Activated CD4-positive, alpha-beta T cell treated with anti-CD3 and anti-CD28 coated beads, Interleukin-2, amount 10 ng/mL, durations not matched to agents 24 days and 14 days (primary cell): ENCODE measurements at regions of chr18 and their contacts with region 1.

Region 1: GRCh38 chr18:62714671-62715435 is 488 bp upstream of the PHLPP1 start:
- DNase-seq: peak; percentile 97
- H3K4me3 Mint-ChIP-seq: peak overlapping the region; percentile 87
- H3K27ac Mint-ChIP-seq: peak overlapping the region; percentile 86
- H3K4me1 Mint-ChIP-seq: peaks cover 19% of the 10 kb centered on the region
- H3K27me3 Mint-ChIP-seq: peaks cover 27% of the 10 kb centered on the region

Region 2: GRCh38 chr18:62324917-62325805 is 389.7 kb before region 1 on chr18 and contains the start of gene TNFRSF11A:
- intact Hi-C with region 1: loop called (anchors 2 kb)
- DNase-seq: peak; percentile 91
- H3K4me3 Mint-ChIP-seq: peak within 1 kb of the TSS; percentile 91
- H3K27ac Mint-ChIP-seq: peak within 1 kb of the TSS; percentile 89
- H3K4me1 Mint-ChIP-seq: peaks cover 54% of the 10 kb centered on the region
- H3K27me3 Mint-ChIP-seq: peaks cover 39% of the 10 kb centered on the region
- total RNA-seq, gene TNFRSF11A: 14.0 and 16.4 TPM in 2 replicates

Region 3: DNA sequence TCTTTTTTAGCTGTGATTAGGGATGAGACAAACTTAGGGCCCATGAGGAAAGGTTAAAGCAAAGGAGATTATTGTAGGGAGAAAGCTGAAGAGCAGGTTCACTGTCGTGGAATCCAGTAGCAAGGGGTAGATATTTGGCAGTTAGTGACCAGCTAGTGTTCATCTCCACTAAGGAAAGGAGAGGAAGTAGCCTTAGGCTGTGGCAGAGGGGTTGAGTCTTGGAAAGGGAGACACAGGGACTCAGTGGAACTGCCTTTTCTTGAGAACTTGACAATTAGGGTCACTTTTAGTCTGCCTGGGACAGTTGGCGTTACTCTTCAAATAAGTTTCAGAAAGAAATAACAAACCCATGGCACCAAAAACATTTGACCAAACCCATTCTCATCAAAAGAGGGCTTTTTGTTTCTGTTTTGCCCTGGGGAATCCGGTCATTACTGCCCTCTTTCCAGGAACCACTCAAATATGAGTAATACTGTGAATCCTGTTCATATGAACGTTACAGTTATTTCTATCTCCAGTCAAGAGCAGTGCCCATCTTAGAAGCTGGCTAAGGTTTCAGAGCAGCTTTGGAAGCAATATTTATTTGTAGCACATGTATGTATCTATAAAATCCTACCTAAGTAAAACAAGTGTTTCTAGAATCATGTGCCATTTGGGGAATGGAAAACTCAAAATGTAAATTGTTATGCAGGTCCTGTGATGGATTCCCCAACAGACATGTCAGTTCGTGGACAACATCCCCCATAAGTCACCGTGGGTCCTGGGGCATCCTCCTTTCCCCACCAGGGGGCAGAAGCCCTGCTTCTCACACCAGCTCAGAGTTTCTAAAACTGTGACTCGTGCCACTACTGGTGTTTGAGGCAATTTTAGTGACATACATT is 76.8 kb before region 1 on chr18:
- intact Hi-C with region 1: loop called (anchors 5 kb)
- DNase-seq: peak; percentile 85
- H3K4me3 Mint-ChIP-seq: no peak overlapping the region
- H3K27ac Mint-ChIP-seq: no peak overlapping the region
- H3K4me1 Mint-ChIP-seq: peaks cover 7% of the 10 kb centered on the region
- H3K27me3 Mint-ChIP-seq: peaks cover 15% of the 10 kb centered on the region

Region 4: DNA sequence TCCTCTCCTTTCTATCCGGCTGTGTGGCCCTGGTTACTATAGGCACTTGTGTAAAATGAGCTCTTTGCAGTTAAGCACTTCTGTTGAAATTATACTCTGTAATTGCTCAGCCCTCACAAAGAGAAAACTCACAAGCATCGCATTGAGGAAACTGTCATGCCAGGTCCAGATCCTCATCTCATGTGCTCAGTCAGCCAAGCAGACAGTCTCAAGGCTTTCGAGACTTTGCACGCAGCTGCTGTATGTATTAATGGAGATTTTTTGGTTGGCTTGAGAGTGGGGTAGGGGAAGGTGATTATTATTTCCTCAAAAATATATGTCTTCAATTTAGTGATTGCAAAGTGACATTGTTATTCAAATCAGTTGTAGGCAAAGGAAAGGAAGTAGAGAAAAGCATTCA is 32.5 kb before region 1 on chr18:
- intact Hi-C with region 1: no loop called
- DNase-seq: no peak
- H3K4me3 Mint-ChIP-seq: no peak overlapping the region
- H3K27ac Mint-ChIP-seq: no peak overlapping the region
- H3K4me1 Mint-ChIP-seq: no peaks in the 10 kb centered on the region
- H3K27me3 Mint-ChIP-seq: peaks cover 3% of the 10 kb centered on the region

Region 5: GRCh38 chr18:62844850-62845643 is 130.2 kb after region 1 on chr18:
- intact Hi-C with region 1: loop called (anchors 1 kb)
- DNase-seq: peak; percentile 72
- H3K4me3 Mint-ChIP-seq: peak overlapping the region; percentile 80
- H3K27ac Mint-ChIP-seq: peak overlapping the region; percentile 94
- H3K4me1 Mint-ChIP-seq: peaks cover 30% of the 10 kb centered on the region
- H3K27me3 Mint-ChIP-seq: no peaks in the 10 kb centered on the region

Region 6: DNA sequence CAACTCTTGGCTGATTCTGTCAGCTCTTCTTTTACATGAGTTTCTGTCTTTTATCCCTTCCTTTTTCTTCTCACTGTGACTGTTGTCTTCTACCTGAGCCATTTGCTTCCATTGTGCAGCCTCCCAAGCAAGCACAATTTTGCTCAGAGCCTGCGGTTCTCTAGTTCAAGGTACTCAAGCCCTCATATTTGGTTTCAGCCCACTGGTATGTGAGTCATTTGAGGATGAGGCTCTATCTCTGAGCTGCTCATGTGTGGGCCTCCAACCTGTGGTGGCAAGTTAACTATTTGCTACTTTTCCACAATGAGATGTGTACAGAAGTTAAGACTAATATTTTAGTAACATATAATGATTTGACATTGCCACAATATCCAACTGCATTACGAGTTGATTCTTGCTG is 183.5 kb after region 1 on chr18:
- intact Hi-C with region 1: no loop called
- DNase-seq: no peak
- H3K4me3 Mint-ChIP-seq: no peak overlapping the region
- H3K27ac Mint-ChIP-seq: no peak overlapping the region
- H3K4me1 Mint-ChIP-seq: peaks cover 8% of the 10 kb centered on the region
- H3K27me3 Mint-ChIP-seq: no peaks in the 10 kb centered on the region

Region 7: DNA sequence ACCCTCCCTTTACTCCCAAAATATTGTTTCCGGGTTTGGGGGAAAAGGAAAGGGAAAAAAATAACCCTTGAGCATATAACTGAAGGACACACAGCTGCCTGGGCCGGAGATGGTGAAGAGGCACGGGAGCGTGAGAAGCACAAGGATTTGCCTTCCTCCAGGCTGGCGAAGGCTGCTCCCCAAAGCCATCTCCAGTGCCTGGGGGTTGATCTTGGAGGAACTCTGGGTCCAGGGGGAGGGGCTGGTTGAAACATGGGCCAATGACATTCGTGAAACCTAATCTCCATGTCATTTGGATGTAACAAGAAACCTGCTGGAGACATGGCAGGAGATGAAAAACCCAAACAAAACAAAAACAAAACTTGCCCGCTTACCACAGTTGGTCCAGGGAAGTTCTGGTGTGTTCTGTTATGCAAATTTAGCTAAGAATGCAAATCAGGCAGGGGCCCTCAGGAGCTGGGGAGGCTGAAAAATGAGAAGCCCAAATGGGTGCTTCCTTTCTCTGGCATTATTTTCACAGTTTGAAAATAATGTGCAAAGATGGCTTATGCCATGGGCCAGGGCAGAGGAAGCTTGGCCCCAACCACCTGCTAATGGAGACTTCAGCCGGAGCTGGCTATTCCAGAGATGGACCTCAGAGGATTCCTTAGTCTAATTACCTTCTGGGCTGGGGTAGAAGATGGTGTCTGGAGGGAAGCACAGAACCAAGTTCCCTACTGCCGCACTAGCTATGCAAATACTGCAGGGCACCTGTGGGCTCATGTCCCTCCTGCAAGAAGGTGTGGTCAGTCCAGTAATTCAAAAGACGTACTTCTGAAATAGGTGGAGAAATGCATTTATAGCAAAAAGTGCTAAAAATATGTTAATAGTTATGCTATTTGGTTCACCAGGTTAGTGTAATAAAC is 423.8 kb after region 1 on chr18:
- intact Hi-C with region 1: no loop called
- DNase-seq: no peak
- H3K4me3 Mint-ChIP-seq: peak overlapping the region; percentile 82
- H3K27ac Mint-ChIP-seq: peak overlapping the region; percentile 90
- H3K4me1 Mint-ChIP-seq: peaks cover 58% of the 10 kb centered on the region
- H3K27me3 Mint-ChIP-seq: no peaks in the 10 kb centered on the region

Region 8: GRCh38 chr18:63253428-63254372 is 538.8 kb after region 1 on chr18:
- intact Hi-C with region 1: no loop called
- DNase-seq: no peak
- H3K4me3 Mint-ChIP-seq: peak overlapping the region; percentile 29
- H3K27ac Mint-ChIP-seq: peak overlapping the region; percentile 64
- H3K4me1 Mint-ChIP-seq: peaks cover 68% of the 10 kb centered on the region
- H3K27me3 Mint-ChIP-seq: no peaks in the 10 kb centered on the region

Region 9: DNA sequence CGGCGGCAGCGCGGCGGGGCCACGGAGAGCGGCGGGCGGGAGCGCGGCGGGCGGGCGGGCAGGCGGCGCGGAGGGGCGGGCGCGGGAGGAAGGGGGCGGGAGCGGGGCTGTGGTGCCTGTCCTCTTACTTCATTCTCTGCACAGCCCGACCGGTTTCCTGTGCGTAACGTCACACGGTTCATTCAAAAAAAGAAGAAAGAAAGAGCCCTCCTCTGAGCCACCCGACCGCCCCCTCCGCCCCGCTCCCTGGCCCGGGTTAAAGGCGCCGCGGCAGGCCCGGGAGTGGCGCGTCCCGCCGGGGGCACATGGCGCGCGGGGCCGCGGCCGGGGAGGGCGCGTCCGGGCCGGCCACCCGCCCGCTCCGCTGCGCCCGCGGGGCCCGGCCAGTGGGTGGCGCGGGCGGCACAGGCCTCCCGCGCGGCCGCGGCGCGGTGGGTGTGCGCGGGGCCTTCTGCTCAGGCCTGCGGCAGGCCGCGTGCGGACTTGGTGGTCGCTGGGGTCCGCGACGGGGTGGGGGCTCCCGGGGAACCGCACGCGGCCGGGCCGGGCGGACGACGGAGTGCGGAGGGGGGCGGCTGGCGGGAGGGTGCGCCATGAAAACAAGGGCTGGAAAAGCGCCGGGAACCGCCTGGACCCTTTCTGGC is 605.3 kb after region 1 on chr18:
- intact Hi-C with region 1: loop called (anchors 5 kb)
- DNase-seq: peak; percentile 96
- H3K4me3 Mint-ChIP-seq: peak overlapping the region; percentile 99
- H3K27ac Mint-ChIP-seq: peak overlapping the region; percentile 97
- H3K4me1 Mint-ChIP-seq: peaks cover 25% of the 10 kb centered on the region
- H3K27me3 Mint-ChIP-seq: no peaks in the 10 kb centered on the region

Region 10: GRCh38 chr18:63439334-63439733 is 724.5 kb after region 1 on chr18:
- intact Hi-C with region 1: loop called (anchors 2 kb)
- DNase-seq: peak; percentile 85
- H3K4me3 Mint-ChIP-seq: no peak overlapping the region
- H3K27ac Mint-ChIP-seq: no peak overlapping the region
- H3K4me1 Mint-ChIP-seq: no peaks in the 10 kb centered on the region
- H3K27me3 Mint-ChIP-seq: peaks cover 29% of the 10 kb centered on the region